Gastrocnemius medialis (tissue), 4 donors: ENCODE measurements at regions of chr1 and their contacts with region 1.

Region 1: DNA sequence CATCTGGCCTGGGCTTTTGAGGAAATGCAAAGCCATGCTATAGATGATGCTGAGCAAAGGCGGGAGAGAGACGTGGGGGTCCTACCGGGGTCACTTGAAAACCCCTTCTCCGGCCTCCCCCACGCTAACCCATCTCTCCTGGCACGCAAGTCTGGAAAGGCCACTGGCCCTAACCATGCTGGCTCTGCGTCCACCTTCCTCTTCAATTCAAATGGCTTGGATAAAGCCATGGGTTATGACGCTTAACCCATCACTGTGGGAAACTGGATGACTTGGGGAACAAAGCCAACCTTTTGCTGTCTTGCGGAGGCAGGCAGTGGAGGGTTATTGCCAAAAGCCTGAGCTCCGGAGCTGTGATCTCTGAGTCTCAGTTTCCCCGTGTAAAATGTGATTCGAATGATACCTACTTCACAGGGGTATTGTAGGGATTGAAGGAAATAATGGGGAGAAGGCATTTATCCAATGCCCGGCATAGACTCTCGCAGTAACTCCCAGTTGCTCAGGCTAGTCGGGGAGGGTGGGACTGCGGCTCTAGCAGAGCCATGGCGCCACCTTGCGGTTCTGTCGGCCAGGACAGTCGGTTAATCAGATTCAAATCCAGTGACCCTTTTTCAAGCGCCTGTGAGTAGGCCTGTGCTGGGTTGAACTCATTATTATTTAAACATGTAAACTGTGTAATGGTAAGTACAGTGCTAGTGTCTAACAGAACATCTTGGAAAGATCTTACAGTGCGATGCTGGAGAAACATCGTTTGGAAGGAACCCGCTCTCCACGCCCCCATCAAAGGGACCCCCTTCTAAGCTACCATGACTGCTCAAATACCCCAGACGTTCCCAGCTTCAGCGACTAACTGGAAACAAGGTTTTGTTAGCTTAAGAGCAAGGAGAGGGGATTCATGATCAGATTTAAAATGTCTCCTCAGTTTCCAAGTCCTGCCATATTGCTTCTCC is 20.3 kb downstream of the NEK2 start:
- DNase-seq: peak; percentile 58 to 77
- ATAC-seq: peak; percentile 79 to 96
- H3K4me3 ChIP-seq: no peak overlapping the region
- H3K27ac ChIP-seq: no peak overlapping the region
- H3K4me1 ChIP-seq: no peaks in the 10 kb centered on the region
- H3K27me3 ChIP-seq: no peaks in the 10 kb centered on the region
- CTCF ChIP-seq: peak; percentile 83 to 92 (median 88)
- POLR2A ChIP-seq: no peak

Region 2: GRCh38 chr1:210400043-210400840 is 1254.9 kb before region 1 on chr1:
- in situ Hi-C with region 1: loop called in 1 of 4 experiments (anchors 25 kb)
- intact Hi-C with region 1: no loop called
- DNase-seq: no peak
- ATAC-seq: no peak
- H3K4me3 ChIP-seq: no peak overlapping the region
- H3K27ac ChIP-seq: no peak overlapping the region
- H3K4me1 ChIP-seq: no peaks in the 10 kb centered on the region
- H3K27me3 ChIP-seq: no peaks in the 10 kb centered on the region
- CTCF ChIP-seq: peak in 4 of 5 experiments; percentile 15 to 61 (median 50)
- POLR2A ChIP-seq: no peak

Region 3: DNA sequence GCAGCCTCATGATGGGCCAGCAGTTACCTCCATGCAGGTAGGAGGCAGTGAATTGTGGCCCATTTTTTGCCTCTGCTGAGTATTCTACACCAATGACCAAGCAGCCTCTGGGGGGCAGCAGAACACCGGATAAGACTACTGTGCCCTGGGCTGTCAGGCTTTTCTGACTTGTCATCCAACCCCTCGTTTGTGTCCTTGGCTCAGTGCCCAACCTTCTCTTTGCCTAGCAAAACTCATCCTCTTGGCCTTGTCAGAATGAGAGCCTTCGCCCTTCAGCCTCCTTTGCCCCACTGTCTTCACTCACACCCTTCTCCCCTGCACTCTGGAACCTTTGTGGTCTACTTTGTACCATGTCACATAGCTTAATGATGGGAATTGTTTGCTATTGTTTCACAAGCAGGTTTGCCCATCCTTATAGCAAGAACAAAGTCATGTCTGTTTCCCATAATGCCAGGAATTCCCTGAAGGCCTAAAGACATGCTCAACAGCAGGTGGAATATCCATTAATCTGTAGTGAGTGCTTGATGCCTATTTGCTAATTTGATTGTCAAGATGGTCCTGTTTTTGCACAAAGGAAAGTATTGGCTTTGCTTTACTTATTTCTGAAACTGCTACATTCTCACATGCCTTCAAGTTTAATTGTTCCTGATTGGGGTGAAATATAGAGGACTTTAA is 1070.5 kb before region 1 on chr1:
- in situ Hi-C with region 1: loop called in 1 of 4 experiments (anchors 25 kb)
- intact Hi-C with region 1: no loop called
- DNase-seq: peak; percentile 29 to 52
- ATAC-seq: peak; percentile 30 to 56
- H3K4me3 ChIP-seq: no peak overlapping the region
- H3K27ac ChIP-seq: no peak overlapping the region
- H3K4me1 ChIP-seq: no peaks in the 10 kb centered on the region
- H3K27me3 ChIP-seq: no peaks in the 10 kb centered on the region
- CTCF ChIP-seq: peak; percentile 11 to 50 (median 38)
- POLR2A ChIP-seq: no peak

Region 4: DNA sequence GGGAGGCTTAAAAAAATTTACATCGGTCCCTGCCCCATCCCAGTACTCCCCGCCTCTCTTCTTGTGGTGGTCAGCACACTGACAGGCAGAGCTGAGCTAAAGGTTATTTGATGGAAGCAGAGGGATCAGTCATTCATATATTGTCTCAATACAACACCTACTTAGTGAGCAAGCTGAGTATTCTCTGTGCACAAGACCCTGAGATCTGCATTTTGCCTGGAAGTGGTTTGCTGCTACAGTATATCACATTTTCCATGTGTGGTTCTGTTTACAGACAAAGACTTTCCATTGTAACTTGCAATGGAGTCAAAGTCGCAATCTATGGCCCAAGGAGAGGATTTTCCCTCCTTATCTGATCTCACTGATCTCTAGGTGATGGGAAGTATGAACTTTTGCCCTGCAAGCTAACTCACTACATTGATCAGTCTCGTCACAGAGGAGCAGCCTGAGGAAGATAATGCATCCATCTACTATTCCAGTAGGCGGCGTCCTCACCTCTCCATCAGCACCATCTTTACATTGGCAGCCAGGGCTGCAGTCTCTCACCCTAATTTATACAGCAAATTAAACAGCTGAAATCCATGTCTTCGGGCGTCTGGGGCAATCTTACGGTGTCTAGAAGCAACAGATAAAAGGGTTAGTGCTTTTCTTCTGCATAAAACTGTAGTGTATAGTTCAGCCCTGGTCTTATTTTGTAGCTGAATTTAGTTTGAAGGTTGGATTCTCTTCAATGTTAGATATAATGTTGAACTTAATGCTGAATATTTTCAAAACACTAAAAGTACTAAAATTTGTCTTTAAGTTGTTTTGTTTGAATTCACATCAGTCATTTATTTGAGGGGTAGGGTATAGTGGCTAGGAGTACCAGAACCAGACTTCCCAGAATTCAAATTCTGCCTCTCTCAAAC is 331.7 kb before region 1 on chr1:
- in situ Hi-C with region 1: loop called in 1 of 4 experiments (anchors 10 kb)
- intact Hi-C with region 1: loop called (anchors 10 kb)
- DNase-seq: no peak
- ATAC-seq: peak in 1 of 2 donors; percentile 28
- H3K4me3 ChIP-seq: no peak overlapping the region
- H3K27ac ChIP-seq: no peak overlapping the region
- H3K4me1 ChIP-seq: no peaks in the 10 kb centered on the region
- H3K27me3 ChIP-seq: no peaks in the 10 kb centered on the region
- CTCF ChIP-seq: peak in 4 of 5 experiments; percentile 38 to 64 (median 44)
- POLR2A ChIP-seq: no peak

Region 5: DNA sequence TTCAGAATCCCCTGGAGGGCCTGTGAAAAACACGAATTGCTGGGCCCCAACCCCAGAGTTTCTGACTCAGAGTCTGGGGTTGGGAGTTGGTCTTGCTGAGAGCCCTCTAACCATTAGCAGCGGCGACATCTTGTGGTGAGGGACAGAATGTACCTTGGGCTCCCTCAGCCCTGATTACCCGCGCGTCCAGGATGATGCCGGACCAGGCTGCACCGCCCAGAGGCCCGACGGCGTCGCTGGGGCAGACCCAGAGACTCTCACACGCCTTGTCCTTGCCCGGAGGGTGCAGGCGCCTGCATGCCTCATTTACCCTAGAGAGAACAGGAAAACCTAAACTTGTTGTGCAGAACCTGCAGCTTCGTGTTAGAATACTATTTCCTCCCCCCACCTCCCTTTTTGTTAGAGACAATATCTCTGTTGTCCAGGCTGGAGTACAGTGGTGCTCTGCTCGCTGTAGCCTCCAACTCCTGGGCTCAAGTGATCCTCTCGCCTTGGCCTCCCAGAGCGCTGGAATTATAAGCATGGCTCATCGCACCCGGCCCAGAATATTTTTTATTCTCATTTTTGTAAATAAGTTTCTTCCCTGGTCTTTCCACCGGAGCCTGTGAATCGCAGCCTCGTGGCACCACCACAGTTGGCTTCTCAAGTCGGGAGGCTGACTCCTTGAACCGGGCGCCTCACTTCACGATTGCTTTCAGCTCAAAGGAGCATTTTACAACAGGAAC is 140.9 kb before region 1 on chr1:
- in situ Hi-C with region 1: loop called in 2 of 4 experiments (anchors 5 to 10 kb)
- intact Hi-C with region 1: loop called (anchors 1 kb)
- DNase-seq: peak; percentile 41 to 46
- ATAC-seq: peak; percentile 80 to 82
- H3K4me3 ChIP-seq: no peak overlapping the region
- H3K27ac ChIP-seq: no peak overlapping the region
- H3K4me1 ChIP-seq: no peaks in the 10 kb centered on the region
- H3K27me3 ChIP-seq: peaks cover 0 to 3% (median 0%) of the 10 kb centered on the region in 3 donors
- CTCF ChIP-seq: peak in 4 of 5 experiments; percentile 17 to 68 (median 59)
- POLR2A ChIP-seq: no peak

Region 6: DNA sequence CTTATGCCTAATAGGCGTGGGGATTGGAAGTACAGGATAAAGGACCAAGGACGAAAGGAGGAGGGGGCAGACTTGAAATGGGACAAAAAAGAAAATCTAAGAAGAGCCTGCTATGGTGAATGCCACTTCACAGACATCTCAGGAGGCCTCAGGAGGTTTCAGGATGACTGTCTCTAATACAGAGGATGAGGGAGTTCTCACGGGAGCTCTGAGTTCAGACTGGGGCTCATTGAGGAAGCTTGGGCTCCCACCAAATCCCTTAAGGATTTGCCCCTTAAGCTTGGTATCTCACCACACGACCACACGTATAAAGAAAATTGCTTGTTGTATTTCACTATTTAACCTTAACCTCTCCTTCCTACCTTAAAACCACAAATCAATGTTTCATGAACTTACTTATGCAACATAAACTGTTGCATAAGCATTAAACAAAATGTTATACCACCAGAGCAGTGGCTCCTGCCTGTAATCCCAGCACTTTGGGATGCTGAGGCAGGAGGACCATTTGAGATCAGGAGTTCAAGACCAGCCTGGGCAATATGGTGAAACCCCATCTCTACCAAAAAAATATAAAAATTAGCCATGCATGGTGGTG is 88.6 kb before region 1 on chr1:
- in situ Hi-C with region 1: loop called in 2 of 4 experiments (anchors 5 to 10 kb)
- intact Hi-C with region 1: no loop called
- DNase-seq: no peak
- ATAC-seq: no peak
- H3K4me3 ChIP-seq: no peak overlapping the region
- H3K27ac ChIP-seq: no peak overlapping the region
- H3K4me1 ChIP-seq: no peaks in the 10 kb centered on the region
- H3K27me3 ChIP-seq: no peaks in the 10 kb centered on the region
- CTCF ChIP-seq: no peak
- POLR2A ChIP-seq: no peak

Region 7: DNA sequence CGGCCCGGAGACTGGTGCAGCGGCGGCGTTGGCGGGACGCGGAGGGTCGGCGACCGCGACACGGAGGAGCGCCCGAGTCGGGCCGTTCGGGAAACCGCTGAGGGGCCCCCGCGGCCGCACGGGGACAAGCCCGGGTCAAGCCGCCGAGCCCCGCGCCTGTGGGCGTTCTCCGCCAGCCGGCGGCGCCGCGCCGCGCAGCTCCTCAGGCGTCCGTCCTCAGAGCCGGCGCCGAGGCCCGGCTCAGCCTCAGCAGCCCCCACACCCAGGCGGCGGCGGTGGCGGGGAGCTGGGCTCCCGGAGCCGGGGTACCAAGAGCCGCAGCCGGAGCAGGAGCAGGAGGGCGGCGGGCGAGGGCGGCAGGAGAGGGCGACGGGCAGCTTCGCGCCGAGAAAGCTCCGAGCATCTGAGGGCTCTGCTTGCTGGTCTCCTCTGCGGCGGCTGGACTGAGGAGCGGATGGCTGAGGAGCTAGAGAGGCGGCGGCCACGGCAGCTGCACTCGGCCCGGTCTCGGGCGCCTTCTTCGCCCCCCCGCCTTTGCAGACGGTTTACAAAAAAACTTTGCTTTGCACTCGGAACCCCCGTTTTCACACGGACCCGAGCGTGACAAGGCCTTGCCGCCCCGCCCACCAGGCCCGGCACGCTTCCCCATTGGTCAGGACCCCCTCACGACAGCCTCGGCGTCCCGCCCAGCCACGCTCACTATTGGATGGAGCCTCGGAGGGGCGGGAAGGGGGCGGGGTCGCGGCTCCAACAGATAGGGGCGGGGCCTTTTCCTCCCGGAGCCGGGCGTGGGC is 76.3 kb before region 1 on chr1 and contains the start of gene SLC30A1:
- in situ Hi-C with region 1: loop called in 3 of 4 experiments (anchors 5 to 10 kb)
- intact Hi-C with region 1: loop called (anchors 1 kb)
- DNase-seq: peak; percentile 97 to 98
- ATAC-seq: peak; percentile 89
- H3K4me3 ChIP-seq: peak within 1 kb of the TSS; percentile 76 to 88 (median 84)
- H3K27ac ChIP-seq: peak within 1 kb of the TSS; percentile 78 to 90 (median 86)
- H3K4me1 ChIP-seq: peaks cover 26 to 30% of the 10 kb centered on the region in 2 donors
- H3K27me3 ChIP-seq: no peaks in the 10 kb centered on the region
- CTCF ChIP-seq: no peak
- POLR2A ChIP-seq: peak; percentile 77 to 87
- total RNA-seq, gene SLC30A1: 1.3 to 3.0 (median 2.1) TPM

Region 8: GRCh38 chr1:211965108-211965805 is 310.1 kb after region 1 on chr1:
- in situ Hi-C with region 1: no loop called
- intact Hi-C with region 1: no loop called
- DNase-seq: no peak
- ATAC-seq: no peak
- H3K4me3 ChIP-seq: no peak overlapping the region
- H3K27ac ChIP-seq: no peak overlapping the region
- H3K4me1 ChIP-seq: no peaks in the 10 kb centered on the region
- H3K27me3 ChIP-seq: no peaks in the 10 kb centered on the region
- CTCF ChIP-seq: no peak
- POLR2A ChIP-seq: no peak